Dendritic cell treated with granulocyte-macrophage colony-stimulating factor and Interleukin-4, amounts not matched to agents 40 ng/mL and 50 ng/mL, for 4 days (primary cell): ENCODE measurements at regions of chr19 and their contacts with region 1.

Region 1: DNA sequence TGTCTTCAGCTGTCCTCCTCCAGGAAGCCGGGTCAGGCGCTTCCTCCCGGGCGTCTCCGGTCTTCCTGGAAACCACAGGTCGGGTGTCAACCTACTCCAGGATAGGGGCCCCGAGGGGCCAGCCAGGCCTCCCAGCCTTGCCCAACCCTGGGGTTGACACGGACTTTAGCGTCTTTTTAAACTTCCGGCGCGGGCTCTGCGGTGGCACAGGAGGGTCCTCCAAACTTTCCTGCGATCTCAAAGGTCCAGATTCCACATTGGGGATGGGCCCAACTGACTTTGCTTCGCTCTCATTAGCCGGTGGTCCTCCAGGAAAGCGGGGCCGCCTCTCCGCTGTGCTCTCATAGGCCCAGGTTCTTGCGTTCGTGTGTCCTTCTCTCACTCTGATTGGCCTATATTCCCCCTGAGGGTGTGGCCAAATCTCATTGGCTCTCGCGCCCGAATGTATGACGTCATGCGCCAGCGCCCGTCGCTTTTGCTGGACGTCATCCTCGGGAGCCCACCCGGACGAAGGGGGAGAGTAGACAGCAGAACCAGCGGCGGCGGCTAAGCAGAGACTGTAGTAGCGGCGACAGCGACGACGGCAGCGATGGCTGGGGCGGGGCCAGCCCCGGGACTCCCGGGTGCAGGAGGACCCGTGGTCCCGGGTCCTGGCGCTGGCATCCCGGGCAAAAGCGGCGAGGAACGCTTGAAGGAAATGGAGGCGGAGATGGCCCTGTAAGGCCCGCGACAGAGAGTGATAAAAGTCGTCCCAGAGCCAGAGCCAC is at the start of gene RBM42:
- H3K4me3 Mint-ChIP-seq: peak within 1 kb of the TSS; percentile 88
- H3K27ac Mint-ChIP-seq: peak within 1 kb of the TSS; percentile 98
- H3K4me1 Mint-ChIP-seq: peaks cover 28% of the 10 kb centered on the region
- H3K27me3 Mint-ChIP-seq: no peaks in the 10 kb centered on the region

Region 2: DNA sequence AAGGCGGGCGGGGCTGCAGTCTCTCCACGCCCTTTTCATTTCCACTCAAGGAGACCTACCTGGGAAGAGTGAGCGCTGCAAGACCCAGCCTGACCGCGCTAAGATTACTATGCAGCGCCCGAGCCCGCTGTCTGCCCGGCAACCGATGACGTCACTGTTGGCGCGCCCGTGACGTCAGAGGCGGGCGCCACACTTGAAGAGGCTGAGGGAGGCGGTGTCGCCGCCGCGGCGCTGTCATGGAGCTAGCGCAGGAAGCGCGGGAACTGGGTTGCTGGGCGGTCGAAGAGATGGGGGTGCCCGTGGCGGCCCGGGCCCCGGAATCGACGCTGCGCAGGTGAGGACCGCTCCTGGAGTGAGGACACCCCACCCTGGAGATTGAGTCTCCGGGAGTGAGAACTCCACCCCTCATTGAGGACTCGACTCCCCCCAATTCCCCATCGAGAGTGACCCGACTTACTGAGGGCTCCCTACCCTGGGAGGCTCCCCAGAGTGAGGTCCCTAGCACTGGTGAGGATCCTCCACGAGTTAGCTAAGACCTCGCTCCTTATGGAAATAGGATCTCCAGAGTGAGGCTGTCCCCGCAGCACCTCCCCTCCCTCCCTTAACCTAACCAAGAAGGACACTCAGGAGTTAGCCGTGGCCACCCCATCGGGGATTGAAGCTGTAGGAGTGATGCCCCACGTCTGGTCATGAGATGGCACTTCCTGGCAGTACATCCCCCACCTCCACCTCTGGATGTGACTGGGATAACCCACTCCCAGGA is 16.0 kb before region 1 on chr19 and contains the start of gene HAUS5:
- intact Hi-C with region 1: loop called (anchors 2 kb)
- H3K4me3 Mint-ChIP-seq: peak within 1 kb of the TSS; percentile 80
- H3K27ac Mint-ChIP-seq: peak within 1 kb of the TSS; percentile 87
- H3K4me1 Mint-ChIP-seq: peaks cover 35% of the 10 kb centered on the region
- H3K27me3 Mint-ChIP-seq: peaks cover 4% of the 10 kb centered on the region

Region 3: DNA sequence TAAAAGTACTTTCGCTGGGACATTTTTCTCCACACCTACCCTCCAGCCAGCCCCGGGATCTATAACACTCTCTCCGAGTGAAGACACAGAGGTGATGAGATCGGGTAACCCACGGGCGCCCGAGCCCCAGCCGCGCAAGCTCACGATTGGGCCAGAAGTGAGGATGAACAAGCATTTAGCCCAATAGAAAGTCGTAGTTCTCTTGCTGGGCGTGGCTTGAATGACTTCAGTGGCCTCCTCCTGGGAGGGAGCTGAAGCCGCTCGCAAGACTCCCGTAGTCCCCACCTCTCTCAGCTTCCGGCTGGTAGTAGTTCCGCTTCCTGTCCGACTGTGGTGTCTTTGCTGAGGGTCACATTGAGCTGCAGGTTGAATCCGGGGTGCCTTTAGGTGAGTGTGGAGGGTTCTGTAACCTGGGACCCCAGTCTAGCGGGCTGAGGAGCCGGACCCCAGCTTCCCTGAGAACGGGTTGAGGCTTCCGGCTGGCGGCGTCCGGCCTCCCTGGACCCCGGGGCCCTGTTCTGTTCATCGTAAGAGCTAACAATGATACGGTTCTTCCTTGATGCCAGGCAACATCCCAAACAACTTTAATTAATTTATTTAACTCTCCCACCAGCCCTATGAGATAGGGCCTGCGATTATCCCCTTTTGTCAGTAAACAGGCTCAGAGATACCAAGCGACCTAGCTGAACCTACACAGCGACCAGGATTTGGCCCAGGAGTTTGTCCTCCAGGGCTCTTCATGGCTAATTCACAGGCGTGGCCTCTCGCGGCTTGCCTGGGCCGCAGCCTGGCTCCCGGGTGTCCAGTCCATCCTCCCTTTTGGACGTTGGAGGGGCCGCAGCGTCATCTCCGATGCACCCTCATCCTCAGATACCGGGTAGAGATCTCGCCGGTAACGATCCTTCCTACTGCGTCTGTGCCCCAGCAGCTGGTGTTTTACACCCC is 19.5 kb after region 1 on chr19 and contains the start of gene COX6B1:
- intact Hi-C with region 1: loop called (anchors 1 kb)
- H3K4me3 Mint-ChIP-seq: peak within 1 kb of the TSS; percentile 89
- H3K27ac Mint-ChIP-seq: peak within 1 kb of the TSS; percentile 97
- H3K4me1 Mint-ChIP-seq: peaks cover 55% of the 10 kb centered on the region
- H3K27me3 Mint-ChIP-seq: no peaks in the 10 kb centered on the region

Region 4: GRCh38 chr19:35675589-35676140 is 46.9 kb after region 1 on chr19:
- intact Hi-C with region 1: no loop called
- H3K4me3 Mint-ChIP-seq: no peak overlapping the region
- H3K27ac Mint-ChIP-seq: no peak overlapping the region
- H3K4me1 Mint-ChIP-seq: peaks cover 8% of the 10 kb centered on the region
- H3K27me3 Mint-ChIP-seq: peaks cover 51% of the 10 kb centered on the region

Region 5: DNA sequence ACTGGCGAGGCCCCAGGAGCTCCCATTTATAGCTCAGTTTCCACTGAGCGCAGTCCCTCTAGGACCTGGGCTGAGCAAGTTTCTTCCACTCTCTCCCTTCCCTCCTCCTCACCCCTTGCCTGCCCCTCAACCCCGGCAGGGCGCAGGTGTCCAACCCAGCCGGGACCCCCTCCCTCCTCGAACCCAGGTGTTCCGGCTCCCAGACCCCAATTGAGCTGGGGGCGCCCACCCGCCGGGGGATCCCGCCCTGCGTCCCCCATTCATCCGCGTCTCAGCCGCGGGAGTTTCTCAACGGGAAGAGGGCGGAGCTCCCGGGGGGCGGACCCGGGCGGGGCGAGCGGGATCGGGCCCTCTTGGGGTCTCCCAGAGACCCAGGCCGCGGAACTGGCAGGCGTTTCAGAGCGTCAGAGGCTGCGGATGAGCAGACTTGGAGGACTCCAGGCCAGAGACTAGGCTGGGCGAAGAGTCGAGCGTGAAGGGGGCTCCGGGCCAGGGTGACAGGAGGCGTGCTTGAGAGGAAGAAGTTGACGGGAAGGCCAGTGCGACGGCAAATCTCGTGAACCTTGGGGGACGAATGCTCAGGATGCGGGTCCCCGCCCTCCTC is 227.9 kb after region 1 on chr19 and contains the start of gene KIRREL2:
- intact Hi-C with region 1: no loop called
- H3K4me3 Mint-ChIP-seq: peak within 1 kb of the TSS; percentile 71
- H3K27ac Mint-ChIP-seq: no peak within 1 kb of the TSS
- H3K4me1 Mint-ChIP-seq: peaks cover 14% of the 10 kb centered on the region
- H3K27me3 Mint-ChIP-seq: peaks cover 89% of the 10 kb centered on the region